Activated naive CD4-positive, alpha-beta T cell treated with anti-CD3 and anti-CD28 coated beads, Interleukin-2, amount 10 ng/mL, durations not matched to agents 7 days and 5 days (primary cell): ENCODE measurements at regions of chr22 and their contacts with region 1.

Region 1: DNA sequence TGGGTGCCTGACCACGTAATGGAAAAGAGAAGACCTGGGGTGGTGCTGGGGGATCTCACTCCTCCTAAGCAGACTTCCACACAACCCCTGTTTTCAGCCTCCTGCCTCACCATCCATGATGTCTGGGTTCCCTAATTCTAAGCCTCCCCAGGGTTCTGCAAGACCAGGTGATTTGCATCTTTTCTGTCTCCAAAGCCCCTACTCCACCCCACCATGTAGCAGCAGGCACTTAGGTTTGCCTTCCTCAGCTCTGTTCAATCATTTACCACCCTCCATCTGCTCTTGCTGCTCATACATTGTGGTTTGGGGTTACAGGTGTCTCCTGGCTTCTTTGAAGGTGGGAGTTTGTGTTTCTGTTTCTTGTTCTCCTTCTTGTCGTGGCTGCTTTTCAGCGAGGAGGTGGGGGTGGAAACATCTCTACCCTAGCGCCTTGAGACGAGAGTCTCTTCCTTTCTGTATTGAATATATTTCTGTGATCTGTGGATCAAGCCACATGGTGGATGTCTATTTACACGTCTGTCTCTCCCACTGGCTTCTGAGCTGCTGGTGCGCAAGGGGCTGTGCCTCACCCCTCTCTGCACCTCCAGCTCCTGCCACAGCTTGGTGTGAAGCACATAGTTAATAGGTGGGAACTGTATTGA is 6.6 kb upstream of the SSTR3 start:
- DNase-seq: peak; percentile 90
- H3K4me3 Mint-ChIP-seq: peak overlapping the region; percentile 77
- H3K27ac Mint-ChIP-seq: peak overlapping the region; percentile 96
- H3K4me1 Mint-ChIP-seq: peaks cover 85% of the 10 kb centered on the region
- H3K27me3 Mint-ChIP-seq: no peaks in the 10 kb centered on the region

Region 2: GRCh38 chr22:37229805-37230672 is 11.1 kb after region 1 on chr22:
- CTCF ChIA-PET with region 1: interaction called, 11 read pairs
- DNase-seq: peak; percentile 96
- H3K4me3 Mint-ChIP-seq: peak overlapping the region; percentile 71
- H3K27ac Mint-ChIP-seq: peak overlapping the region; percentile 98
- H3K4me1 Mint-ChIP-seq: peaks cover 92% of the 10 kb centered on the region
- H3K27me3 Mint-ChIP-seq: no peaks in the 10 kb centered on the region